MCF 10A (cell line): ENCODE measurements at regions of chr13 and their contacts with region 1.

Region 1: DNA sequence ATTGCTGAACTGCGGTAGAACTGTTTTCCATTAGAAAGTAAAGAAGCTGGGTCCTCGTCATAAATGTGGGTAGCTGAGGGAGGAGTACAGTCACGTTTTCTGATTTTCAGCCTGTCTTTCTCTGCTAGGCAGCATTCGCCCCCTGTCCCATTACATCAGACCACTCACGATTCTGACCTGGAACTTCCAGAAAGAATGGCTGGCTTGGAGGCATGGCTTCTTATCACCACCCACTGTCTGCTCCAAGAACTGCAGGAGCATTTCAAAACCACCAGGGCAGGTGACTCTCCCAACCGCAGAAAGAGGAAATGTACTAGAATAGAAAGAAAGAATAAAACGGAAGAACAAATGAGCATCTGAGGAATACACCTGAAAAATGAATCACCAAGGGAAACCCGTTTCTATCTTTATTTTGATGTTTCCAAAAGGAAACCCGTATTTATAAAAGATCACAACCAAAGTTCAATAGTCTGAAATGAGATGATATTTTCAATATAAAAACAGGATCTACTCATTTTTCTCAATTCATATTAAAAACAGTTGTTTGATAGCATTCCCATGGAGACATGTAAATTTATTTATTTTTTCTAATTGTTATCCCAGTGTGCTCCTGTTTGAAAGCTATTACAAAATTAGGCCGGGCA is 22.1 kb upstream of the POMP start:
- DNase-seq: peak; percentile 75
- H3K4me3 Mint-ChIP-seq: no peak overlapping the region
- H3K27ac Mint-ChIP-seq: no peak overlapping the region
- H3K4me1 Mint-ChIP-seq: peaks cover 5% of the 10 kb centered on the region
- H3K27me3 Mint-ChIP-seq: peaks cover 9% of the 10 kb centered on the region
- CTCF ChIP-seq: peak; percentile 92

Region 2: GRCh38 chr13:28324181-28324789 is 312.5 kb before region 1 on chr13:
- CTCF ChIA-PET with region 1: interaction called, 85 read pairs
- POLR2A ChIA-PET with region 1: no interaction called
- intact Hi-C with region 1: loop called (anchors 1 kb)
- DNase-seq: peak; percentile 80
- H3K4me3 Mint-ChIP-seq: no peak overlapping the region
- H3K27ac Mint-ChIP-seq: no peak overlapping the region
- H3K4me1 Mint-ChIP-seq: no peaks in the 10 kb centered on the region
- H3K27me3 Mint-ChIP-seq: no peaks in the 10 kb centered on the region
- CTCF ChIP-seq: peak; percentile 78

Region 3: DNA sequence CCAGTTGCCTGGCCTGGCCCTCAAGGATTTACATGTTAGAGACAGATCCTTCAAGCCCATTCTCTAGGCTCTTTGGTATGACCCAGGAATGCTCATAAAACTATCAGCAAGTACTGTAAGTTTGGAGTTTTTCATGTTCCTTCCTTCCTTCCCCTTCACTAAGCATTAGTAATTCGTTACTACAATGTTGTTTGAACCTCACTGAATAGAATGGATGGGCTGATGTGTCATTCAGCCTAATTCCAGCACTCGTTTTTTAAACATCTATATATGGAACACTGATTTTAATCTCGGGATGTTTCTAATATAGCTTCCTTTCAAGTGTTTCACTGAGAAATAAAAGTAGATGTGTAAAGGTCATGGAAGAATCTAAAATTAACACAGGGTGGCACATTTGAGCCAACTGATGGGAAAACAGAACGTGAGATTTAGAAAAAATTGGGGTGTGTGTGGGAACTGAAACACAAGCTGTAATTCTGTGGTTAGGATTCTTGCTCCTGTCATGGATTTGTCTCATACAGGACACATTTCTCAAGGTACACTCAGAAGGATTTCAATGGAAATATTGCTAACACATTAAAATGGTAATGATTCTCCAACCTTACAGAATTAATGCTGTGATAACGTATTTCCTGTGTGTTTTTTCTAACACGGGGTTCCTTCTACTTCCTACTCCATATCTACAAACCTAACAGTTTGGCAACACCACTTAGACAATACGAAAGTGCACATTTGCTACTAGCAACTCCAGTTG is 235.3 kb before region 1 on chr13:
- CTCF ChIA-PET with region 1: interaction called, 3 read pairs
- POLR2A ChIA-PET with region 1: interaction called, 3 read pairs
- intact Hi-C with region 1: loop called (anchors 5 kb)
- DNase-seq: peak; percentile 61
- H3K4me3 Mint-ChIP-seq: no peak overlapping the region
- H3K27ac Mint-ChIP-seq: no peak overlapping the region
- H3K4me1 Mint-ChIP-seq: peaks cover 6% of the 10 kb centered on the region
- H3K27me3 Mint-ChIP-seq: peaks cover 12% of the 10 kb centered on the region
- CTCF ChIP-seq: no peak

Region 4: DNA sequence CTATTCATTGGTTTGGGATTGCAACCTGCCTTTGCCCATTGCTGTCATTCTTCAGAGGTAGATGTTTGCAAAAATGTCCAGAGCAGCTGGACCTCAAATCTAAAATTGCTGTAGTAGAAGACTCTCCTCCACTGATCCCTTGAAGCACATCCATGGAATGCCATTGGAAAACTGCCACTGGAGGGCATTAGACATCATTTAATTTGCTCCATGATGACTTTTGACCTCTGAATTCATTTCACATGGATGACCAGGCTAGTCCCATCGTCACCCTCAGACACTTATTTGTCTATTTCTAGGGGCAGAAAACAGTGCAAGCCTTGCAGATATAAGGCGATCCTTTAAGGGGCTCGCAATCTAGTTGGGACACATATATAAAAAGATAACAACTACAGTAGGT is 107.9 kb before region 1 on chr13:
- CTCF ChIA-PET with region 1: interaction called, 6 read pairs
- POLR2A ChIA-PET with region 1: no interaction called
- intact Hi-C with region 1: loop called (anchors 1 kb)
- DNase-seq: peak; percentile 33
- H3K4me3 Mint-ChIP-seq: no peak overlapping the region
- H3K27ac Mint-ChIP-seq: no peak overlapping the region
- H3K4me1 Mint-ChIP-seq: no peaks in the 10 kb centered on the region
- H3K27me3 Mint-ChIP-seq: peaks cover 8% of the 10 kb centered on the region
- CTCF ChIP-seq: no peak

Region 5: DNA sequence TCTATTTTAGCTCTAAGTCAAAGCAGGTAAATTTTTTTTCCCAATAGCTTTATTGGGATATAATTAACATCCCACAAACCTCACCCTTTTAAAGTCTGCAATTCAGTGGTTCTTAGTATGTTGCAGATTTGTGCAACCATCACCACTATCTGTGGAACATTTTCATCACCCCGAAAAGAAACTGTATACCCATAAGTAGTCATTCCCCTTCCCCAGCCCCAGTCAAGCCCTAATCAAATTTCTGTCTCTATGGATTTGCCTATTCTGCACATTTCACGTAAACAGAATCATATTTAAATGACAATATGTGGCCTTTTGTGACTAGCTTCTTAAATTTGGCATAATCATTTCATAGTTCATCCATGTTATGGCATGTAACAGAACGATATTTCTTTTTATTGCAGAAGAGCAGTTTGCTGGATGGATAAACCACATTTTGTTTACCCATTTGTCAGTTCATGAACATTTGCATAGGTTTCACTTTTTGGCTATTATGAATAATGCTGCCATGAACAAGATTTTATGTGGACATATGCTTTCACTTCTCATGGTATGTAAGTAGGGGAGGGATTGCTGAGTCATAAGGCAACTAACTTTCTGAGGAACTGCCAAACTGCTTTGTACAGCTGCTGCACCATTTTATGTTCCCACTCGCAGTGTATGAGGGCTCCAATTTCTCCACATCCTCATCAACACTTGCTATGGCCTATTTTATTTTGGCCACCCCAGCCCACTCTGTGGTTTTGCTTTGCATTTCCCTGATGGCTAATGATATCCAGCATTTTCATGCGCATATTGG is 71.0 kb after region 1 on chr13:
- CTCF ChIA-PET with region 1: no interaction called
- POLR2A ChIA-PET with region 1: no interaction called
- intact Hi-C with region 1: no loop called
- DNase-seq: peak; percentile 80
- H3K4me3 Mint-ChIP-seq: no peak overlapping the region
- H3K27ac Mint-ChIP-seq: no peak overlapping the region
- H3K4me1 Mint-ChIP-seq: peaks cover 13% of the 10 kb centered on the region
- H3K27me3 Mint-ChIP-seq: no peaks in the 10 kb centered on the region
- CTCF ChIP-seq: no peak

Region 6: GRCh38 chr13:28792992-28793391 is 156.2 kb after region 1 on chr13:
- CTCF ChIA-PET with region 1: no interaction called
- POLR2A ChIA-PET with region 1: no interaction called
- intact Hi-C with region 1: loop called (anchors 1 kb)
- DNase-seq: no peak
- H3K4me3 Mint-ChIP-seq: no peak overlapping the region
- H3K27ac Mint-ChIP-seq: no peak overlapping the region
- H3K4me1 Mint-ChIP-seq: no peaks in the 10 kb centered on the region
- H3K27me3 Mint-ChIP-seq: peaks cover 28% of the 10 kb centered on the region
- CTCF ChIP-seq: no peak